Psoas muscle (tissue), 8 donors: ENCODE measurements at regions of chr12 and their contacts with region 1.

Region 1: DNA sequence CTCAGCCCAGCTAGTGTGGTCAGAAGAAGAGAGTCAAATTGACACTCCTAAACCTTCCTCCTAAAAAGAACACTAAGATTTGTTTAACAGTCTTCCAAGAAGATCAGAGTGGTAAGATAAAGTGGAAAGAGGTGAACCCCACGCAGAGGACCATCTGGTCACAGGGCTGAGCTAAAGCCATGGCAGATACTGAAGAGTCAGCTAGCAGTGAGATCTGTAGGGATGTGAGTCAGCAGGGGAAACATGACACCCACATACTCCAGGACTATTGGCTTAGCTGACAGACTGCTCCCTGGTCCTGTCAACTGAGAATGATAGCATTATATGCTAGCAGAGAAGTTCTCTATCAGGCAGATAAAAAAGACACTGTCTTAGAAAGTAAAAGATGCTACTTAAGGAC is 269.4 kb upstream of the ALG10 start:
- DNase-seq: no peak
- ATAC-seq: no peak
- H3K4me3 ChIP-seq: no peak overlapping the region
- H3K27ac ChIP-seq: no peak overlapping the region
- H3K4me1 ChIP-seq: no peaks in the 10 kb centered on the region
- H3K27me3 ChIP-seq: no peaks in the 10 kb centered on the region
- CTCF ChIP-seq: no peak

Region 2: GRCh38 chr12:33817713-33818112 is 64.9 kb after region 1 on chr12:
- intact Hi-C with region 1: loop called in 1 of 2 experiments (anchors 10 kb)
- DNase-seq: no peak
- ATAC-seq: no peak
- H3K4me3 ChIP-seq: no peak overlapping the region
- H3K27ac ChIP-seq: no peak overlapping the region
- H3K4me1 ChIP-seq: no peaks in the 10 kb centered on the region
- H3K27me3 ChIP-seq: no peaks in the 10 kb centered on the region
- CTCF ChIP-seq: no peak